K562 (cell line): ENCODE measurements at regions of chr5 and their contacts with region 1.

Region 1: GRCh38 chr5:157342822-157343402 is 77.0 kb downstream of the CYFIP2 start:
- DNase-seq: peak; percentile 49 to 61 (median 52)
- ATAC-seq: peak; percentile 92
- H3K4me3 ChIP-seq: no peak overlapping the region
- H3K27ac ChIP-seq: no peak overlapping the region
- H3K4me1 ChIP-seq: no peaks in the 10 kb centered on the region
- H3K27me3 ChIP-seq: peaks cover 6 to 15% of the 10 kb centered on the region in 2 experiments; a peak in 4 of 5 replicates
- CTCF ChIP-seq: peak; percentile 67 to 75 (median 67)
- EP300 ChIP-seq: no peak
- POLR2A ChIP-seq: no peak
- RAD21 ChIP-seq: peak; percentile 41 to 57

Region 2: DNA sequence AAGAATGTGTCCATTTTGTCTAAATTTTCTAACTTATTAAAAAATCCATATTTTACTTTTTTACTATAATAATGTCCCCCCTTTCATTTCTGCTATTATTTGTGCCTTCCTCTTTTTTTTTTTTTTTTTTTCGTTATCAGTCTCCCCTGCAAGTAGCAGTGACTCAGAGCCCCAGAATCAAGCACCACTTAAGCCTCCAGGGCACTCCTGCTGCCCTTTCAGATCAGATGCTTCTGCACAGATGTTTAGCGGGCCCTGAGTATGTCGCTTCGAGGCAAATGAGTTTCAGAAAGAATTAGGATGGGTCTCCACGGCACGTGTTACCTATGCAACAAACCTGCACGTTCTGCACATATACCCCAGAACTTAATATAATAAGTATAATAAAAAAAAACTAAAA is 212.0 kb before region 1 on chr5:
- CTCF ChIA-PET with region 1: no interaction called
- POLR2A ChIA-PET with region 1: no interaction called
- in situ Hi-C with region 1: no loop called
- intact Hi-C with region 1: no loop called
- DNase-seq: peak in 2 of 4 experiments; percentile 23 to 25
- ATAC-seq: peak; percentile 61
- H3K4me3 ChIP-seq: no peak overlapping the region
- H3K27ac ChIP-seq: no peak overlapping the region
- H3K4me1 ChIP-seq: no peaks in the 10 kb centered on the region; a peak in 1 of 5 replicates
- H3K27me3 ChIP-seq: no peaks in the 10 kb centered on the region
- CTCF ChIP-seq: no peak
- EP300 ChIP-seq: no peak
- POLR2A ChIP-seq: no peak
- RAD21 ChIP-seq: no peak

Region 3: GRCh38 chr5:157471709-157472108 is 128.8 kb after region 1 on chr5:
- CTCF ChIA-PET with region 1: no interaction called
- POLR2A ChIA-PET with region 1: no interaction called
- in situ Hi-C with region 1: loop called (anchors 5 kb)
- intact Hi-C with region 1: loop called (anchors 5 kb)
- DNase-seq: peak; percentile 45 to 64 (median 56)
- ATAC-seq: peak; percentile 86
- H3K4me3 ChIP-seq: no peak overlapping the region
- H3K27ac ChIP-seq: no peak overlapping the region
- H3K4me1 ChIP-seq: no peaks in the 10 kb centered on the region
- H3K27me3 ChIP-seq: 0 out of 5 replicates have a peak, but pooled peaks cover 0 to 6% of the 10 kb centered on the region in 2 experiments
- CTCF ChIP-seq: peak; percentile 58 to 70 (median 61)
- EP300 ChIP-seq: no peak
- POLR2A ChIP-seq: no peak
- RAD21 ChIP-seq: peak; percentile 29 to 62; a peak in 3 of 4 replicates

Region 4: GRCh38 chr5:157486221-157486681 is 143.3 kb after region 1 on chr5:
- CTCF ChIA-PET with region 1: no interaction called
- POLR2A ChIA-PET with region 1: no interaction called
- in situ Hi-C with region 1: no loop called
- intact Hi-C with region 1: no loop called
- DNase-seq: no peak
- ATAC-seq: no peak; the same call in 2 of the 3 replicates
- H3K4me3 ChIP-seq: no peak overlapping the region
- H3K27ac ChIP-seq: no peak overlapping the region
- H3K4me1 ChIP-seq: peaks cover 0 to 4% of the 10 kb centered on the region in 2 experiments; a peak in 1 of 5 replicates
- H3K27me3 ChIP-seq: peaks cover 0 to 32% of the 10 kb centered on the region in 2 experiments; a peak in 2 of 5 replicates
- CTCF ChIP-seq: no peak
- EP300 ChIP-seq: no peak
- POLR2A ChIP-seq: no peak
- RAD21 ChIP-seq: no peak

Region 5: GRCh38 chr5:157731272-157732129 is 388.6 kb after region 1 on chr5 and contains the start of gene THG1L:
- CTCF ChIA-PET with region 1: no interaction called
- POLR2A ChIA-PET with region 1: no interaction called
- in situ Hi-C with region 1: loop called (anchors 10 kb)
- intact Hi-C with region 1: no loop called
- DNase-seq: peak; percentile 97 to 99 (median 99)
- ATAC-seq: peak; percentile 98
- H3K4me3 ChIP-seq: peak within 1 kb of the TSS; percentile 51
- H3K27ac ChIP-seq: peak within 1 kb of the TSS; percentile 86
- H3K4me1 ChIP-seq: peaks cover 5 to 15% of the 10 kb centered on the region in 2 experiments; a peak in 4 of 5 replicates
- H3K27me3 ChIP-seq: no peaks in the 10 kb centered on the region
- CTCF ChIP-seq: no peak
- EP300 ChIP-seq: peak; percentile 50; the same call in 1 of the 2 replicates
- POLR2A ChIP-seq: peak; percentile 96
- RAD21 ChIP-seq: no peak
- polyA plus RNA-seq, gene THG1L: 26.5 to 40.7 TPM